ENCODE measurements at regions of chr16 and their contacts with region 1.

Region 1: DNA sequence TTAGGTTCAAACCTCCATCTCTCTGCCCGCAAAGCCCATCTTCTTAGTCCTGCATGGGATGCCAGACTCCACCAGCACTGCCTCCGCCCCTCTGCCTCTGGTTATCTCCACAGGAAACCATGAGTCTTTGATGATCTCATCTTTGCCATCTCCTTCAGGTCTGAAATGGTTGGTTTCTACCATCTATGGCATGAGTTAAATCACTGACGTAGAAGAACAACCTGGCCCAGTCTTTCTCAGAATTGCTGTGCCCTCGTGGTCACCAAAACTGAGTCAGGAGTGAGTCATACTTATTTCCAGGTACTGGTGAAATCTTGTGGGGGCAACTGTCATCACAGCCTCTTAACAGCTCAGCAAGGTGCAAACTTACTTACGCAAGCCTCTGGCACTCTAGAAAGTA is 468.7 kb upstream of the C16orf82 start:
- DNase-seq: peak; percentile 83
- ATAC-seq: peak; percentile 91
- H3K4me3 Mint-ChIP-seq: peak overlapping the region; percentile 20
- H3K27ac Mint-ChIP-seq: peak overlapping the region; percentile 82
- H3K4me1 Mint-ChIP-seq: peaks cover 54% of the 10 kb centered on the region
- H3K27me3 Mint-ChIP-seq: peaks cover 19% of the 10 kb centered on the region

Region 2: DNA sequence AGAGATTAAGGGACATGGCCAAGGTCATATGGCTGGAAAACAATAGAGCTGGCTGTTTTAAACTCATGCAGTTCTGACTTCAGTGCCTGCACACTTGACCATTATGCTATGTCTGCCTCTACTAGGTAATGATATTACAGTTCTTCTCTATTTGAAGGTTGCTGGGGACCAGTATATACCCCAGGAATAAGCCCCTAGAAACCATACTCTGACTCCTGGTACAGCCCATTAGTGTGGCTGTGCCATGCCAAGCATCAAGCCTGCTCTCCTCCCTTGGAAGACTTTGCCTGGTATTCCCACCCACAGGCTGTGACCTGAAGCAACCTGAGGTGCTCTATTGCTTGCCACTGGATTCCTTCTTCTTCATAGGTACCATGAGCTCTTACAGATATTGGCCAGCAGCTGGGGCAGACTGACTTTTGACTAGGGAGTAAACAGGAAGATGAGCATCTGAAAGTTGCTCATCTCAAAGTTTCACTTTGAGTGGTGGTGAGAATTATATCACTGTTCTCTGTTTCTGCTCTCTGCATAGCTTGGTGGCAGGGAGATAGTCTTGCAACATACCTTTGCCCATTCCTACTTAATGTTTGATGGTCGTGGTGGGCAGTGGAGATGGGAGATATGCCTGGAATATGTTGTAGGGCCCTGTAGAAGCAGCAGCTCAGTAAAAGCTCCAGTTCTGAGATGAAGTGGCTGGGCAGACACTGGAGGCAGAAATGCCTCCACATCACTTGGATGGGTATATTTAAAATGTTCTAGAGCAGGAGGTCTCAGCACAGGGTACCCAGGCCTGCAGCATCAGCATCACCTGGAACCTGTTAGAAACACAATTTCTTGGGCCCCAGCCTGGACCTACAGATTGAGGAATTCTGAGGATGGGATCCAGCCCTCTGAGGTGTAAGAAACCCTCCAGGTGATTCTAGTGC is 631.6 kb before region 1 on chr16:
- CTCF ChIA-PET with region 1: no interaction called
- POLR2A ChIA-PET with region 1: no interaction called
- intact Hi-C with region 1: loop called in 1 of 2 experiments (anchors 2 kb)
- DNase-seq: peak; percentile 52
- ATAC-seq: peak; percentile 98
- H3K4me3 Mint-ChIP-seq: no peak overlapping the region
- H3K27ac Mint-ChIP-seq: no peak overlapping the region
- H3K4me1 Mint-ChIP-seq: peaks cover 13% of the 10 kb centered on the region
- H3K27me3 Mint-ChIP-seq: peaks cover 12% of the 10 kb centered on the region

Region 3: DNA sequence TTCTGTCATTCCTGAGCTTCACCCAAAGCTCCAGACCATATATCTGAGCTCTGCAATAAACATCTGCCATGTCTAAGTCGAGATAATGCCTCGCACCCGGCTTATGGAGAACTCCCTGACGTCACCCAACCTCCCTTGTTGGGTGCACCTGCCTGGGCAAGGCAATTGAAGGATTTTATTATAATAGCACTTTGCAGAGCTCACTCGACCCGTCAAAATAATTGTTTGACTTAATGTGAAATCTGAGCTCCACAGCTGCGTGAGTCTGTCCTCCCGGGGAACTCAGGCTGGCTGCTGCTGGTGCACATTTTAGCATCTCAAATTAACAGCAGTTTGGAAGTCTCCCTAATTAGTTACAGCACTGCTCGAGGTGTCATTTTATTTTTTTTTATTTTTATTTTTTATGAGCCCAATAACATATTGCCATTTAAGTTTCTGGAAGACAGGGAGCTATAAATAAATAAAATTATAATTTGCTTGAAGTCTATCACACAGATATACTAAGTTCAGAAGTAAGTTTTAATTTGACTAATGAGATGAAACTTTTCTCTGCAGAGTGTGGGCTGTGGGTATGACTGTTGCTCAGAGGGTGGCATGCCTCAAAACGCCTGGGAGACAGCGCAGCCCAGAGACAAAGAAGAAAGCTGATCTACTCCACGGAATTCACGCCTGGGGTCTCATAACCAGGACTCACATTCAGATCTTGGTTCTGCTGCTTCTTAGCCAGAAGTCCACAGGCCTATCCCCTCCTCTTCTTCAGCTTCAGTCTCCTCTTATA is 67.3 kb after region 1 on chr16:
- CTCF ChIA-PET with region 1: no interaction called
- POLR2A ChIA-PET with region 1: no interaction called
- intact Hi-C with region 1: loop called in 1 of 2 experiments (anchors 2 kb)
- DNase-seq: peak; percentile 59
- ATAC-seq: peak; percentile 89
- H3K4me3 Mint-ChIP-seq: no peak overlapping the region
- H3K27ac Mint-ChIP-seq: no peak overlapping the region
- H3K4me1 Mint-ChIP-seq: peaks cover 20% of the 10 kb centered on the region
- H3K27me3 Mint-ChIP-seq: peaks cover 13% of the 10 kb centered on the region

Region 4: GRCh38 chr16:26672206-26672605 is 74.1 kb after region 1 on chr16:
- CTCF ChIA-PET with region 1: interaction called, 3 read pairs
- POLR2A ChIA-PET with region 1: no interaction called
- intact Hi-C with region 1: loop called in 1 of 2 experiments (anchors 2 kb)
- DNase-seq: peak; percentile 76
- ATAC-seq: peak; percentile 73
- H3K4me3 Mint-ChIP-seq: no peak overlapping the region
- H3K27ac Mint-ChIP-seq: peak overlapping the region; percentile 73
- H3K4me1 Mint-ChIP-seq: peaks cover 23% of the 10 kb centered on the region
- H3K27me3 Mint-ChIP-seq: peaks cover 3% of the 10 kb centered on the region

Region 5: DNA sequence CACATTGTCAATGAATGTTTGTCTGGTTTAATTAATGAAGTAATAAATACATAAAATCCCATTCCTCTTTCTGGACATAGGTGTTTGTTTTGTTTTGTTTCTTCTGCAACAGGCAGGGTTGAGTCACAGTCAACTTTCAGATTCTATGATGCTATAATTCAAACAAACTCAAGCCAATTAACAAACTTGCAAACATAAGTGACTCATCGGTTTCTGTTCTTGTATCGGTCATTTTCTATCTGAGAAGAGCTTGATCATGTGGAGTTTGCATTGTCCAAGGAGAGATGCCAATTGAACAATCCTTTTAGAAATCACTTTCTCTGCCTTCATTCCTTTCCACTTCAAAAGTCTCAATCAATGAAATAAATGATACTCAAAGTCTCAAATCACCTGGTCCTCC is 174.4 kb after region 1 on chr16:
- CTCF ChIA-PET with region 1: no interaction called
- POLR2A ChIA-PET with region 1: no interaction called
- intact Hi-C with region 1: loop called in 1 of 2 experiments (anchors 2 kb)
- DNase-seq: no peak
- ATAC-seq: peak; percentile 70
- H3K4me3 Mint-ChIP-seq: no peak overlapping the region
- H3K27ac Mint-ChIP-seq: no peak overlapping the region
- H3K4me1 Mint-ChIP-seq: peaks cover 9% of the 10 kb centered on the region
- H3K27me3 Mint-ChIP-seq: peaks cover 39% of the 10 kb centered on the region

Measured in activated CD4-positive, alpha-beta T cell treated with anti-CD3 and anti-CD28 coated beads for 36 hours (primary cell).